AG04449 (cell line): ENCODE measurements at regions of chr13 and their contacts with region 1.

Region 1: DNA sequence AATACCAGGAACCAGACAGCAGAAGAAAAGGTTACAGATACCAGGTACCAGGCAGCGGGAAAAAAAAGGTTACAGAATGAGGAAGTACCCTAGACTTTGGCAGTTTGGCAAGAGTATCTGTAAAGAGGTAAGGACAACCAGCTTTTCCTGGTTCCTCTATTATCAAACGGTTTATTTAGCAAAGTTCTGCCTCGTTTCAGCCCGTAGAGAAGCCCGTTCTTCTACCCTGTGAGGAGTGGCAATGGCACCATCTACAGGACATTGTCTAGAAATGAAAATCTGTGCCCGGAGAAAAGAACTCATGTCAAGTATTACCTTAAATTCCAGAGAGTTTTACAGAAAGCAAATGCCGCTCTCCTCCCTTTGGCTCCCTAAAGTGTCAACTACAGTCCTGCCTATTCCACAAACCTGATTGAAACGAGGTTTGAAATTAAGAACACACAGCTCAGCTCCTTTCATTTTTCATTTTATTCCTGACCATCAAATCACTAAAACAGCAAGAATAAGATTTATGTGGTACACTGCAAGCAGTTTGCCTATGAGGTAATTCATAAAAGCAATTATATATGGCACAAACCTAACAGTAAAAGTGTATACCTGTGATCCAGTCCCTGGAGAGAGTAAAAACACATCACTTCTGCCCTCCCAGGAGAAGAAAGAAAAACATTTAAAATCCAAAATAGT is 226.3 kb downstream of the SLC7A1 start:
- DNase-seq: no peak
- H3K4me3 ChIP-seq: no peak overlapping the region
- CTCF ChIP-seq: peak; percentile 43

Region 2: GRCh38 chr13:28819735-28820098 is 549.5 kb before region 1 on chr13:
- CTCF ChIA-PET with region 1: interaction called, 14 read pairs
- POLR2A ChIA-PET with region 1: no interaction called
- DNase-seq: no peak
- H3K4me3 ChIP-seq: no peak overlapping the region
- CTCF ChIP-seq: peak; percentile 13